Dorsolateral prefrontal cortex (tissue), 120 donors: ENCODE measurements at regions of chr4 and their contacts with region 1.

Region 1: DNA sequence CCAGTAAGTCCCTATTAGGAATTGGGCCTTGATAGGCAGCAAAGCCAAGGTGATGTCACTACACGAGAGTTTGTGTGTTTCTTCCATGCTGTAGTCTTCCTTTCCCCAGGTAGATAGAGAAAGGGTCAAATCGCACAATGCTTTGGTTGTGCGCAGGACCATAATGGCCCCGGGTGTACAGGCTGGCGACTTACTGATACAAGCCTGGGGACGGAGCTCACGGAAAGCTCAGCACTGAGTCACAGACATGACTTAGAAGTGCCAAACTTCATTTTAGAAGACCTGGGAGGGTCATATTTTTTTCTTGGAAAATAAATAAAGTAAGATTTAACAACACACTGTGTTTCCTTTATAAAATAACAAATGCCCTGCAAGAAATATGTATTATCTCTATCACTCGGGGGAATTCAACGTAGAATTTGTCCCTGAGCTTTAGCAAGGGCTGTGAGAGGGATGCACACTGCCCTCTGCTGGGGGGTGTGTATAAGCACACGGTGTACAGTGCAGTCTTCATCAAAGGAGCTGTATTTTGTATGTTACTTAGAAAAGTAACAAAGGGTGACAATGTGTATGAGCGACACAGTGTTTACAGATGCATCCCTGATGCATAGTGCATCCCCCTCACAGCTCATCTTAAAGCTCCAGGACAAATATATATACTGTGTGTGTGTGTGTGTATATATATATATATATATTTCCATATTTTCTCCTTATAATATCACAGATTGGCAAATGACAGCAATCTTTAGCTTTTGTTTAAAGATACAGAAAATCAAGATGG is 254.5 kb upstream of the VEGFC start:
- DNase-seq: peak in 7 of 10 donors; percentile 28 to 70 (median 49)
- H3K4me3 ChIP-seq: no peak overlapping the region
- H3K27ac ChIP-seq: no peak overlapping the region
- H3K27me3 ChIP-seq: no peaks in the 10 kb centered on the region
- CTCF ChIP-seq: peak; percentile 63 to 92 (median 84)

Region 2: GRCh38 chr4:176377780-176378179 is 669.5 kb before region 1 on chr4:
- intact Hi-C with region 1: loop called (anchors 2 to 5 kb)
- DNase-seq: no peak
- H3K4me3 ChIP-seq: peak overlapping the region in 2 of 59 donors; percentile 1
- H3K27ac ChIP-seq: peak overlapping the region in 5 of 59 donors; percentile 13 to 40 (median 31)
- H3K27me3 ChIP-seq: no peaks in the 10 kb centered on the region
- CTCF ChIP-seq: peak; percentile 39 to 84 (median 72)

Region 3: DNA sequence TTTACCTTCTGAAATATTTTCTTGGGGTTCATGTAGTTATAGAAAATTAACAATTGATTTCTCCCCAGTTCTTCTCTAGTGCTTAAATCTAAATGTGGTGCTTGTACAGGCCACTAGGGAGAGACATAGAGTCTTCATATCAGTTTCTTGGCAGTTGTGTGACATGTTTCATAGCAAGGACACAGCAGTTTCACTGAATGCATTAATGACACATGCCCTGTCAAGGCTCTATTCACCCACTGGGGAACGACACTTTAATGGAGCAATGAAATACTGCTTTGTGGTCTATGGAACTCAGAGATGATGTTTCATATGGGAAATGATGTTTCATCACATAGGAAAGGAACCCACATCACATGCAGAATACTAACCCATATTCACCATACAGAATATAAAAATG is 257.3 kb before region 1 on chr4:
- intact Hi-C with region 1: loop called in 1 of 2 experiments (anchors 5 kb)
- DNase-seq: no peak
- H3K4me3 ChIP-seq: peak overlapping the region in 1 of 59 donors; percentile 80
- H3K27ac ChIP-seq: no peak overlapping the region
- H3K27me3 ChIP-seq: peaks cover 0 to 13% (median 0%) of the 10 kb centered on the region in 45 donors
- CTCF ChIP-seq: peak in 55 of 56 donors; percentile 20 to 71 (median 55)

Region 4: DNA sequence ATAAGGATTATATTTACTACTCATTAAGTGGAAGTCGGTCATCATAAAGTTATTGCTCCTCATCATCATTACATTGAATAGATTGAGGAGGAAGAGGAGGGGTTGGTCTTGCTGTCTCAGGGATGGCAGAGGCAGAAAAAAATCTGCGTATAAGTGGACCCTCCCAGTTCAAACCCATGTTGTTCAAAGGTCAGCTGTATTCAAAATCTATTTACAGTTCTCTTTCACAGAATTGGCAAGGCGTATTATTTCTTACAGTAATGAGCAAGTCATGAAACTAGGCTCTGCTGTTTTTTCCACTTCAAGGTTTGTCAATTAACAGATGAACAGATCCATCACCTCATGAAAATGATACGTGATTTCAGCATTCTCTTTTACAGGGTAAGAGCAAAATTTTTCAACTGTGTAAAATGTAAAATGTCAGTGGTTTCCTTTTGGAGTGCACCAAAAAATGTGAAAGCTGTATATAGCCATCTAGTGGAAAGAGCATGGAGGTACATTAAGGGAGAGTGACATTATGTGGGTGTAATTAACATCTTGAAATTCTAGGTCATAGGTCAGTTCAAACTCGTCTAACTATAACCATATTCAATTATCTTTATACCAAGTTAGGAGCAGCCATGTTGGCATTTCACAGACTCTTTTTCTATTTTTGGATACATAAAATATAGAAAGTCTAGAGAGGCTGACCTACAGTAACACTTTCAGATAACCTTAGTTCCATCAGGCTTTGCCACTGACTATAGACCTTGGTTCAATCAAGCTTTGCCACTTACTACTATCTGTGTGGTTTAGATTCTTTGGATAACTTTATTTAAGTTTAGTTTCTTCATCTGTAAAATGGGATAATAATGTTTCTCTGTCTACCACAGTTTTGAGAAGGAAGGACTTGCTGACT is 292.5 kb after region 1 on chr4:
- intact Hi-C with region 1: loop called in 1 of 2 experiments (anchors 10 kb)
- DNase-seq: no peak
- H3K4me3 ChIP-seq: no peak overlapping the region
- H3K27ac ChIP-seq: no peak overlapping the region
- H3K27me3 ChIP-seq: no peaks in the 10 kb centered on the region
- CTCF ChIP-seq: peak; percentile 47 to 81 (median 68)